H1 (cell line): ENCODE measurements at regions of chr1 and their contacts with region 1.

Region 1: DNA sequence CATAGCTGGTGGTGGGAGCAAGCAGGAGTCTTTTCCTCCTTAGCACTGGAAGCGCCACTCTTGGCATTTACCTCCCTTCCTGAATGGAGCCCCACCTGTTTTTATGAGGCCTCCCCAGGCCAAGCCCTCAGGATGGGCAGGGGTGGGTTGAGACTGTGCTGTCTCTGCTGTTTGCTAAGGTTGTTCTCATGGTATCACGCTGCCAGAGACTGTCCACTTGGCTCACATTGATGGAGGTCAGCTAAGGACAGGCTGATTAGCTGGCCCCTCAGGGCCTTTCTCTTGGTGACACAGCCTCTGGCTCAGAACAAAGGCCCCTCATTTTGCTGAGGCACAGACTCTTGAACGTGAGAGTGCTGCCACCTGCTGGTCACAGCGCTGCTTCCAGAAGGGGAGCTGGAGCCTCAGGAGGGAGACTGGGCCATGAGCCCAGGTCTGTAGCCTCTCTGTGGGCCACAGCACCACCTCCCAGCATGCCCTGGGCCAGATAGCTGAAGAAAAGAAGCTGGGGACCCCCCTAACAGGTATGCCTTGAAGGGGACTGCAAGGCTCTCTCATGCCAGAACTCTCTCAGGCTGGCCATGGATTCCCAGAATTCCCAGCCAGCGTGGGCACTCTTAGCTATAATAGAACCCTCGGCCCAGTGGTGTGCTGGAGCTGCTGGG is 85.6 kb downstream of the CD58 start:
- DNase-seq: peak; percentile 70 to 97
- H3K4me3 ChIP-seq: no peak overlapping the region
- H3K27ac ChIP-seq: no peak overlapping the region
- H3K4me1 ChIP-seq: no peaks in the 10 kb centered on the region; a peak in 1 of 7 replicates
- H3K27me3 ChIP-seq: no peaks in the 10 kb centered on the region; a peak in 1 of 7 replicates
- CTCF ChIP-seq: peak; percentile 86 to 94 (median 91)
- EP300 ChIP-seq: no peak
- POLR2A ChIP-seq: no peak
- RAD21 ChIP-seq: peak; percentile 96 to 97

Region 2: GRCh38 chr1:116139592-116140134 is 345.5 kb before region 1 on chr1:
- CTCF ChIA-PET with region 1: interaction called, 115 read pairs
- POLR2A ChIA-PET with region 1: no interaction called
- DNase-seq: no peak
- H3K4me3 ChIP-seq: no peak overlapping the region
- H3K27ac ChIP-seq: no peak overlapping the region
- H3K4me1 ChIP-seq: no peaks in the 10 kb centered on the region
- H3K27me3 ChIP-seq: no peaks in the 10 kb centered on the region
- CTCF ChIP-seq: no peak
- EP300 ChIP-seq: no peak
- POLR2A ChIP-seq: no peak
- RAD21 ChIP-seq: no peak

Region 3: GRCh38 chr1:116372587-116373444 is 112.4 kb before region 1 on chr1 and contains the start of gene ATP1A1:
- CTCF ChIA-PET with region 1: interaction called, 10 read pairs
- POLR2A ChIA-PET with region 1: interaction called, 5 read pairs
- DNase-seq: peak; percentile 89 to 99
- H3K4me3 ChIP-seq: peak within 1 kb of the TSS; percentile 84 to 89 (median 86)
- H3K27ac ChIP-seq: peak within 1 kb of the TSS; percentile 92
- H3K4me1 ChIP-seq: peaks cover 3 to 19% (median 17%) of the 10 kb centered on the region in 4 experiments
- H3K27me3 ChIP-seq: no peaks in the 10 kb centered on the region; a peak in 3 of 7 replicates
- CTCF ChIP-seq: no peak
- EP300 ChIP-seq: peak; percentile 7 to 98; a peak in 1 of 3 replicates
- POLR2A ChIP-seq: peak; percentile 95 to 96
- RAD21 ChIP-seq: 0 out of 4 replicates have a peak, but pooled peaks of 1 of the 2 experiments have one; percentile 3
- total RNA-seq, gene ATP1A1: 325 and 326 TPM in 2 replicates

Region 4: DNA sequence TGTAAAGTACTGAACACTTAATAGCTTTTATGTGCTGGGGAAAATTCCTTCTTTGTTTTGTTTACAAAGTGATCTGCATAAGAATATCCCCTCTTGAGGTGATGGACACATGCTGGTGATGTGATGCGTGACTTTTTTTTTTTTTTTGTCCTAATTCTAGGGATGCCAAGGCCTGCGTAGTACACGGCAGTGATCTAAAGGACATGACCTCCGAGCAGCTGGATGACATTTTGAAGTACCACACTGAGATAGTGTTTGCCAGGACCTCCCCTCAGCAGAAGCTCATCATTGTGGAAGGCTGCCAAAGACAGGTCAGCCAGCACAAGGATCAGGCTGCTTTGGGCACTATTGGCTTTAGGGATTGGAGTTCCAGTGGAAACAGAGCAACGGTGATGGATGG is 87.5 kb before region 1 on chr1:
- CTCF ChIA-PET with region 1: interaction called, 28 read pairs
- POLR2A ChIA-PET with region 1: no interaction called
- DNase-seq: no peak
- H3K4me3 ChIP-seq: no peak overlapping the region
- H3K27ac ChIP-seq: peak overlapping the region; percentile 54; the same call in 1 of the 2 replicates
- H3K4me1 ChIP-seq: no peaks in the 10 kb centered on the region
- H3K27me3 ChIP-seq: peaks cover 0 to 1% (median 0%) of the 10 kb centered on the region in 4 experiments; a peak in 1 of 7 replicates
- CTCF ChIP-seq: no peak
- EP300 ChIP-seq: no peak
- POLR2A ChIP-seq: no peak
- RAD21 ChIP-seq: no peak

Region 5: GRCh38 chr1:116418091-116418830 is 66.9 kb before region 1 on chr1:
- CTCF ChIA-PET with region 1: interaction called, 85 read pairs
- POLR2A ChIA-PET with region 1: interaction called, 8 read pairs
- DNase-seq: peak; percentile 53 to 92
- H3K4me3 ChIP-seq: peak overlapping the region; percentile 68 to 95 (median 82)
- H3K27ac ChIP-seq: peak overlapping the region; percentile 24; the same call in 1 of the 2 replicates
- H3K4me1 ChIP-seq: peaks cover 0 to 11% (median 6%) of the 10 kb centered on the region in 4 experiments; a peak in 6 of 7 replicates
- H3K27me3 ChIP-seq: no peaks in the 10 kb centered on the region
- CTCF ChIP-seq: no peak
- EP300 ChIP-seq: no peak
- POLR2A ChIP-seq: peak; percentile 76 to 94
- RAD21 ChIP-seq: peak in 1 of 2 experiments; percentile 11; a peak in 2 of 4 replicates

Region 6: DNA sequence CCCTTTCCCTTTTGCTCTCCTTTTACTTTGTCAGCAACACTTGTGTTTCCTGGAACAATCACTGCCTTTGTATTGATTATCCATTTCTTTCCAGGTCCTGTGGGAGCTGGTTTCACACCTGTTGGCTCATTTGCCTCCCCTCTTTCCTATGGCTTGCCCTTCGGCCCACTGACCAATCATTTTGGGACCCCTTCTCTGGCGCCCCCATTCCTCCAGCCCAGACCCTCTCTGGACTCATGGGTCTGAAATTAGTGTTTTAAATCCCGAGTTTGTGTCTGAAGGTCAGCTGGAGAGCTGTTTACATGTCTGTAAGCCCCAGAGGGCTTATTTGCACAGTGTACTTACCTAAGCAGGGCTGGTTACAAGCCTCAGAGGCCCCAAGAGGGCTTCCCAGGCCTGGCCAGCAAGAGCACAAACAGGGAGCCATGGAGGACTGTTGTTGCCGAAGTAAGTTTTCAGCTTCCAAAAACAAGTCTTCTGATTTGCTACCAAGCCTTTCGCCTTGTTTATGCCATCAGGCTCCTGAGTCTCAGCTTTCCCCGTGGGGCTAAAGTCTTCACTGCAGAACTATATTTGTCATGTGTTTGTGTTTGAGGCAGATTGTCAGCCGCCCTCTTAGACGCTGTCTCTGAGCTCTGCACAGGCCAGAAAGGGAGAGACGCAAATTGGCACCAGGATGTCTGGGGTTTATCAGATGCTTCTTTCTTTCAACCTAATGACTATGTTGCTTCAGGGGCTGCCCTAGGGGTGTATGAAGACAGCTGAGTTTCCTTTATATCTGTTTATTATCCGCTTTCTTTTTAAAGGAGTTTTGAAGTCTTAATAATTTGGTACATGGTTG is 19.1 kb before region 1 on chr1:
- CTCF ChIA-PET with region 1: interaction called, 33 read pairs
- POLR2A ChIA-PET with region 1: no interaction called
- DNase-seq: no peak
- H3K4me3 ChIP-seq: no peak overlapping the region
- H3K27ac ChIP-seq: no peak overlapping the region
- H3K4me1 ChIP-seq: no peaks in the 10 kb centered on the region
- H3K27me3 ChIP-seq: no peaks in the 10 kb centered on the region
- CTCF ChIP-seq: no peak
- EP300 ChIP-seq: no peak
- POLR2A ChIP-seq: no peak
- RAD21 ChIP-seq: no peak

Region 7: DNA sequence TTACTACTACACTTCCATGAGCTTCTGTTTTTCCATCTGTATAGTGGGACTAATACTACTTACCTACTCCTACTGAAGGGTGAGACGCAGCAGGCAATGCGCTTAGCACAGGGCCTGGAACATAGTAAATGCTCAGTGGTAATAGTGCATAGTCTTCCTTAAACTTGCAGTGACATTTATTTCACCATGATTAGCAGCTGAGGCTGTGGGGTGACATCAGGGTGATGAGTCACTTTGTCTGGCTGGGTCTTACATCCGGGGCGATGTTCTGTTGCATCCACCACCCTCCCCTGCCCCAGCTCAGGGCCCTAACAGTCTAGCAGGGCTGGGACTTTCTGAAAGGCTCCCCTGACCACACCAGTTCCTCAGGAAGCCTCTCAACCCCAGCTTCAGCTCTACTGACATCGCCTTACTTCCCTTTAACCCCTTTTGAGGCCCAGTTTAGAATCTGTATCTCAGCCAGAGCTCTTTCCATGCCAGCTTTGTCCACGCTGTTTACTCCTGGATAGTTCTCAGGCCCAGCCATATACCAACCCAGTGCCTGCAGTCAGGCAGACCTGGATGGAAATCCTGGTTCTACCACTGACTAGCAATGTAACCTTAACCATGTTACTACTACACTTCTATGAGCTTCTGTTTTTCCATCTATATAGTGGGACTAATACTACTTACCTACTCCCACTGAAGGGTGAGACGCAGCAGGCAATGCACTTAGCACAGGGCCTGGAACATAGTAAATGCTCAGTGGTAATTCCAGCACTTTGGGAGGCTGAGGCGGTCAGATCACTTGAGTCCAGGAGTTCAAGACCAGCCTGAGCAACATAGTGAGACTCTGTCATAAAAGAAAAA is 19.3 kb after region 1 on chr1:
- CTCF ChIA-PET with region 1: interaction called, 116 read pairs
- POLR2A ChIA-PET with region 1: no interaction called
- DNase-seq: no peak
- H3K4me3 ChIP-seq: no peak overlapping the region
- H3K27ac ChIP-seq: no peak overlapping the region
- H3K4me1 ChIP-seq: peaks cover 0 to 5% (median 0%) of the 10 kb centered on the region in 4 experiments; a peak in 1 of 7 replicates
- H3K27me3 ChIP-seq: no peaks in the 10 kb centered on the region
- CTCF ChIP-seq: no peak
- EP300 ChIP-seq: no peak
- POLR2A ChIP-seq: no peak
- RAD21 ChIP-seq: no peak